Posterior cingulate gyrus (tissue), 11 donors: ENCODE measurements at regions of chr1 and their contacts with region 1.

Region 1: DNA sequence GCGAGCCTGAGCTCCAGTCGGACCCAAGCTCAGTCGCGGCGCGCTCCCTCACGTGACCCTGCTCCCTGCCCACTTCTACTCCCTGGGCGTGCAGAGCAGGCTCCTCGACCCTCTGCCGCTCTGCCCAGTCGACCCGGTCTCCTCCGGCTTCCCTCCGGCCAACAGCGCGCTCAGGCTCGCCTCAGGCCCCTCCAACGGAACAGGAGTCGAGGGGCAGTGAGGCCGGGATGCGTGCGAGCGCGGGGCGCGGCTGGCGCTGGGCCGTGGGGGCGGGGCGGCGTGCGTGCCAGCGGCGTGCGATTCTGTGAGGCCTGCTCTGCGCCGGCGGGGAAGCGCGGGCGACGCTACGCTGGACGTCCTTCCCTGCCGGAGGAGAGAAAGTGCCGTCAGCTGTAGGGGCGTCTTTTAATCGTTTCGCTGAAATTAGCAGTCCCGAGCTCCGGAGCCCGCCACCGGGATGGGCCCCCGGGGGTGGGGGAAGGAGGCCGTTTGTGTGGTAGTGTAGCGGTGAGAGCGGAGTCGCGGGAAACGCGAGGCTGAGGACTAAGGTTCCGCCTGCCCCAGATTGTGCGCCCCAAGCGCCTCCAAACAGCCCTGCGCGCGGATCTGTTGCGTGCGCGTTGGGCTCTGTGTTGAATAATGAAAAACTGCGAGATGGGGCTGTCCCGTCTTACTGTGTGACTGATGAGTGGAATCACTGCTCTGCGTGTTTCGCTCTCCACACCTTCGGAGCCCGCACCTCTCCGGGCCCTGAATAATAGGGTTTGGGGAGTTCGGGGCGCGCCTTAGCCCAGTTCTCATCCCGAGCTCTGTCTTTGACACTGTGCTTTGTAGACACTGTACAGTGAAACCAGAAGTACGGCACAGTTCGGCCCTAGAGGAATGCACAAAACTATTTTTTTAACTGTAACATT is at the start of gene ACBD6:
- DNase-seq: peak; percentile 81 to 97 (median 84)

Region 2: GRCh38 chr1:180515864-180516388 is 13.3 kb after region 1 on chr1:
- intact Hi-C with region 1: loop called (anchors 1 kb)
- DNase-seq: peak in 9 of 10 donors; percentile 28 to 95 (median 69)